B cell (primary cell): ENCODE measurements at regions of chr4 and their contacts with region 1.

Region 1: GRCh38 chr4:140595065-140595464 is 26.3 kb upstream of the UCP1 start:
- DNase-seq: peak; percentile 53
- ATAC-seq: peak; percentile 73
- H3K4me3 ChIP-seq: no peak overlapping the region
- H3K4me3 Mint-ChIP-seq: no peak overlapping the region
- H3K27ac ChIP-seq: no peak overlapping the region
- H3K27ac Mint-ChIP-seq: no peak overlapping the region
- H3K4me1 ChIP-seq: no peaks in the 10 kb centered on the region
- H3K4me1 Mint-ChIP-seq: no peaks in the 10 kb centered on the region
- H3K27me3 ChIP-seq: peaks cover 0 to 8% (median 4%) of the 10 kb centered on the region in 4 experiments
- H3K27me3 Mint-ChIP-seq: peaks cover 45% of the 10 kb centered on the region
- CTCF ChIP-seq: peak; percentile 62

Region 2: GRCh38 chr4:140367738-140368137 is 227.3 kb before region 1 on chr4:
- CTCF ChIA-PET with region 1: no interaction called
- POLR2A ChIA-PET with region 1: no interaction called
- intact Hi-C with region 1: no loop called
- DNase-seq: no peak
- ATAC-seq: no peak
- H3K4me3 ChIP-seq: no peak overlapping the region
- H3K4me3 Mint-ChIP-seq: no peak overlapping the region
- H3K27ac ChIP-seq: no peak overlapping the region
- H3K27ac Mint-ChIP-seq: no peak overlapping the region
- H3K4me1 ChIP-seq: peaks cover 4 to 5% of the 10 kb centered on the region in 2 donors
- H3K4me1 Mint-ChIP-seq: peaks cover 2% of the 10 kb centered on the region
- H3K27me3 ChIP-seq: no peaks in the 10 kb centered on the region
- H3K27me3 Mint-ChIP-seq: no peaks in the 10 kb centered on the region
- CTCF ChIP-seq: no peak

Region 3: DNA sequence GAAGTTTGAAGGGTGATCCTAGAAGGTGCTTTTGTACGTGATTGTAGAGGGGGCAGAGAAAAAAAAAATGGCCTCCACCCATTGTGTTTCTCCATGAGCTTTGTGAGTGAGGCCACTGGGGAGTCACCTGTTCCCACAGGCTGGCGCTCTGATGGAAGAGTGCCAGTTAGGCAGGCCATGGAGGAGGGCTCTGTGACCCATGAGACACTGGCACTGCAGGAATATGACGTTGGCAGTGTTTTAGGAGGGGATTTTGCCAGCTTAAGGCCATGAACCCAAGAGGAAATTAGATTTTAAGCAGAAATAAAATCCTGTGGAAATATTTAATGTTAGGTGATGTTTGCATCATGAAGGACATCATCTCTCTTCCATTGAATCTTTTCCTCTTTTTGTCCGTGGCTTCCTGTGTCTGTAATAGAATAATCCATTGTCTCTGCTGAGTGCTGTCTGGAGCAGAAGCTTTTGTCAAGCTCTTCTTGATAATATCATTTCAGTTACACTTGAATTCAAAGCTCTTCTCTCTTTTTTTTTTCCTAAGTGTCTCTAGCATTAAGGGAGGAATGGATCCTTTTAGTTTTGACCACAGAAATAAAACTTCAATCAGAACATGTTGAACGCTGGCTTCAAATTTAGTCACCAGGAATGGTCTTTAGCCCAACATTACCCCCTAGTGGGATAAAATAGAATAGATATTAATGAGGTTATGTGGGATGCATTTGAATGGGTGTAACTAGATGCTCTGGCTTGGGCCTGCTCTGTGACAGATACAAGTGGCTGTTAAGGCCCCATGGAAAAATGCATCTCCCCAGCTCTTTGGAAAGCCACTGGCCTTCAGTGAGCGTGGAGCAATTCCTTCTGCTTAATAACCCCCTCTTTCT is 14.7 kb after region 1 on chr4:
- CTCF ChIA-PET with region 1: interaction called, 14 read pairs
- POLR2A ChIA-PET with region 1: no interaction called
- intact Hi-C with region 1: no loop called
- DNase-seq: peak; percentile 57
- ATAC-seq: peak; percentile 68
- H3K4me3 ChIP-seq: no peak overlapping the region
- H3K4me3 Mint-ChIP-seq: no peak overlapping the region
- H3K27ac ChIP-seq: no peak overlapping the region
- H3K27ac Mint-ChIP-seq: no peak overlapping the region
- H3K4me1 ChIP-seq: peaks cover 0 to 6% of the 10 kb centered on the region in 2 donors
- H3K4me1 Mint-ChIP-seq: peaks cover 7% of the 10 kb centered on the region
- H3K27me3 ChIP-seq: no peaks in the 10 kb centered on the region
- H3K27me3 Mint-ChIP-seq: peaks cover 15% of the 10 kb centered on the region
- CTCF ChIP-seq: peak; percentile 76

Region 4: GRCh38 chr4:140666889-140667614 is 72.0 kb after region 1 on chr4:
- CTCF ChIA-PET with region 1: no interaction called
- POLR2A ChIA-PET with region 1: no interaction called
- intact Hi-C with region 1: no loop called
- DNase-seq: no peak
- ATAC-seq: no peak
- H3K4me3 ChIP-seq: no peak overlapping the region
- H3K4me3 Mint-ChIP-seq: no peak overlapping the region
- H3K27ac ChIP-seq: peak overlapping the region; percentile 23 to 65
- H3K27ac Mint-ChIP-seq: peak overlapping the region; percentile 63
- H3K4me1 ChIP-seq: peaks cover 8 to 9% of the 10 kb centered on the region in 2 donors
- H3K4me1 Mint-ChIP-seq: peaks cover 21% of the 10 kb centered on the region
- H3K27me3 ChIP-seq: no peaks in the 10 kb centered on the region
- H3K27me3 Mint-ChIP-seq: no peaks in the 10 kb centered on the region
- CTCF ChIP-seq: no peak

Region 5: GRCh38 chr4:140884431-140885058 is 289.5 kb after region 1 on chr4:
- CTCF ChIA-PET with region 1: interaction called, 13 read pairs
- POLR2A ChIA-PET with region 1: no interaction called
- intact Hi-C with region 1: loop called (anchors 1 kb)
- DNase-seq: peak; percentile 76
- ATAC-seq: peak; percentile 67
- H3K4me3 ChIP-seq: no peak overlapping the region
- H3K4me3 Mint-ChIP-seq: no peak overlapping the region
- H3K27ac ChIP-seq: no peak overlapping the region
- H3K27ac Mint-ChIP-seq: peak overlapping the region; percentile 38
- H3K4me1 ChIP-seq: no peaks in the 10 kb centered on the region
- H3K4me1 Mint-ChIP-seq: peaks cover 3% of the 10 kb centered on the region
- H3K27me3 ChIP-seq: peaks cover 0 to 17% (median 0%) of the 10 kb centered on the region in 4 experiments
- H3K27me3 Mint-ChIP-seq: peaks cover 29% of the 10 kb centered on the region
- CTCF ChIP-seq: peak; percentile 79